Activated naive CD4-positive, alpha-beta T cell treated with anti-CD3 and anti-CD28 coated beads for 36 hours (primary cell): ENCODE measurements at regions of chr17 and their contacts with region 1.

Region 1: GRCh38 chr17:49223517-49224197 is 6.9 kb downstream of the PHOSPHO1 start:
- DNase-seq: peak; percentile 81
- H3K4me3 Mint-ChIP-seq: peak overlapping the region; percentile 63
- H3K27ac Mint-ChIP-seq: peak overlapping the region; percentile 19
- H3K4me1 Mint-ChIP-seq: peaks cover 28% of the 10 kb centered on the region
- H3K27me3 Mint-ChIP-seq: peaks cover 10% of the 10 kb centered on the region

Region 2: GRCh38 chr17:48928876-48929811 is 294.5 kb before region 1 on chr17:
- CTCF ChIA-PET with region 1: no interaction called
- intact Hi-C with region 1: no loop called
- DNase-seq: no peak
- H3K4me3 Mint-ChIP-seq: no peak overlapping the region
- H3K27ac Mint-ChIP-seq: peak overlapping the region; percentile 62
- H3K4me1 Mint-ChIP-seq: peaks cover 3% of the 10 kb centered on the region
- H3K27me3 Mint-ChIP-seq: no peaks in the 10 kb centered on the region

Region 3: GRCh38 chr17:49210158-49211029 is 13.3 kb before region 1 on chr17 and contains the starts of genes ABI3 and GNGT2:
- CTCF ChIA-PET with region 1: interaction called, 19 read pairs
- intact Hi-C with region 1: loop called (anchors 2 kb)
- DNase-seq: peak; percentile 88
- H3K4me3 Mint-ChIP-seq: peak within 1 kb of the TSS; percentile 85
- H3K27ac Mint-ChIP-seq: peak within 1 kb of the TSS; percentile 94
- H3K4me1 Mint-ChIP-seq: peaks cover 58% of the 10 kb centered on the region
- H3K27me3 Mint-ChIP-seq: no peaks in the 10 kb centered on the region
- total RNA-seq, gene ABI3: 18.7 to 18.9 TPM
- total RNA-seq, gene GNGT2: 40.3 to 41.3 TPM

Region 4: DNA sequence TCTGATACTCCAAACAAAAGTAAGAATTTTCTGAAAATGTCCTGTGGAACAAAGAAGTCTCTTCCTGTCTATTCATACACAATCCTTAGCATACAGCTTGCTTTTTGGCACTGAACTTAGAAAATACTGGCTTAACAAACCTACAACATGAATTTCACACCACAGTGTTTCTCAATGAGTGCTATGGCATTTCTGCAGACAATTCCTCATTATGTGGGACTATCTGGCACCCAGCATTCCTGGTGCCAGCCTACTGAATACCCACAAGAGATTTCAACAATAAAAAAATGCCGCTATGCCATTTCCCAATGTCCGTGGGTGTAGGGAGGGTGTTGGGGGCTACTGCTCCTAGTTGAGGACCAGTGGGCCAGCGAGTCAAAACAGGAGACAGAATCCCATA is 76.3 kb after region 1 on chr17:
- CTCF ChIA-PET with region 1: no interaction called
- intact Hi-C with region 1: no loop called
- DNase-seq: no peak
- H3K4me3 Mint-ChIP-seq: no peak overlapping the region
- H3K27ac Mint-ChIP-seq: no peak overlapping the region
- H3K4me1 Mint-ChIP-seq: no peaks in the 10 kb centered on the region
- H3K27me3 Mint-ChIP-seq: no peaks in the 10 kb centered on the region